Activated CD4-positive, alpha-beta T cell treated with anti-CD3 and anti-CD28 coated beads for 36 hours (primary cell): ENCODE measurements at regions of chrX and their contacts with region 1.

Region 1: GRCh38 chrX:124010157-124010556 is 48.7 kb downstream of the STAG2 start:
- DNase-seq: no peak
- ATAC-seq: peak; percentile 81
- H3K4me3 Mint-ChIP-seq: peak overlapping the region; percentile 11
- H3K27ac Mint-ChIP-seq: peak overlapping the region; percentile 17
- H3K4me1 Mint-ChIP-seq: peaks cover 66% of the 10 kb centered on the region
- H3K27me3 Mint-ChIP-seq: no peaks in the 10 kb centered on the region

Region 2: DNA sequence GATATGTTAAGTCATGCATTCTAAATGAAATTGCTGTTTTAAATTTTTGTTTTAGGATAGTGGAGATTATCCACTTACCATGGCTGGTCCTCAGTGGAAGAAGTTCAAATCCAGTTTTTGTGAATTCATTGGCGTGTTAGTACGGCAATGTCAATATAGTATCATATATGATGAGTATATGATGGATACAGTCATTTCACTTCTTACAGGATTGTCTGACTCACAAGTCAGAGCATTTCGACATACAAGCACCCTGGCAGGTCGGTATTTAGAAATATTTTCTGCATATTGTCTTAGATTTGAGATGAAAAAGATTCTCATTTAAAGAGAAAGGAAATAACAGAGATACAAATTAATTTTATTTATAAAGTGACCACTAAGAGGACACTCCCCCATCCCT is 35.0 kb after region 1 on chrX:
- CTCF ChIA-PET with region 1: interaction called, 3 read pairs
- POLR2A ChIA-PET with region 1: no interaction called
- intact Hi-C with region 1: loop called in 1 of 2 experiments (anchors 5 kb)
- DNase-seq: no peak
- ATAC-seq: peak; percentile 51
- H3K4me3 Mint-ChIP-seq: no peak overlapping the region
- H3K27ac Mint-ChIP-seq: no peak overlapping the region
- H3K4me1 Mint-ChIP-seq: peaks cover 25% of the 10 kb centered on the region
- H3K27me3 Mint-ChIP-seq: no peaks in the 10 kb centered on the region